ENCODE measurements at regions of chr2 and their contacts with region 1.

Region 1: GRCh38 chr2:237432484-237433092 is 18.6 kb upstream of the COL6A3 start:
- DNase-seq: peak; percentile 64 to 94
- H3K4me3 ChIP-seq: peak overlapping the region; percentile 22; the same call in 1 of the 2 replicates
- H3K27ac ChIP-seq: peak overlapping the region; percentile 76
- H3K4me1 ChIP-seq: peaks cover 34% of the 10 kb centered on the region
- H3K27me3 ChIP-seq: no peaks in the 10 kb centered on the region
- CTCF ChIP-seq: no peak; the same call in 1 of the 2 replicates

Region 2: DNA sequence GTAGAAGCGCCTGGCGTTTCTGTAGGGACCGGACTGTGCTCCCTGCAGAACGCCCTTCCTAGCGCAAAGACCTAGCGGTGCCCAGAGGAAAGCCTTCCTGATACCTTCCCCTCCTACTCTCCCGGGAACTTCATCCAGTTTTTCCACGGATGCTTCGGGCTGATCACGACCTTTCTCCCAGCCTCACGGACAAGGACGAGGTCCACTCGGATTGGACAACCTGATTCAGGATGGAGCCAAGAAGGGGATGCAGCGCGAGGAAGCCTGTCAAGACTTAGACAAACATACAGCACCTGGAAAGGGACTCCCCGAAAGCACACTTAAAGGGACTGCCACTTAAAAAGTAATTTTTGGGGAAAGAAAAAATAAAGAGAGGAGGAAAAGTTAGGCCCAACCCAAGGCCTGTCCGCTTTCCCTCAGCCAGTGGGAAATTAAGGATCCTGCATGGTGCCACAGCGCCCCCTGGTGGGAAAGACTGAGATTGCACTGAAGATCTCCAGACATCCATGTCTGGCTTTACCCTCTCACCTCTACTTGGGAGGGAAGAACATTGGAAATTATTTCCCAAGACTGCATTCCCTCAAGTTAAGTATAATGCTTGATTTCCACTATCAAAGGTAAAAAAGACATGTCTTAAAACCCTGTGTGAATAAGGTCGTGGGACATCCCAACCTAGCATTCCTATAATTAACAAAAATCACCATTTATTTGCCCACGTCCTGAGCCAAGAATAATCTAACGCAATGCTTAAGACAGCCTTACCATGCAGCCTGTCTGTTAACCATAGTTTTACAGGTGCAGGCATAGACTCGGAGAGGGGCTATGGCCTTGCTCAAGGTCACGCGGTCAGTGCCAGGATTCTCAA is 360.3 kb before region 1 on chr2:
- CTCF ChIA-PET with region 1: no interaction called
- POLR2A ChIA-PET with region 1: interaction called, 10 read pairs
- intact Hi-C with region 1: no loop called
- DNase-seq: peak; percentile 40 to 76
- H3K4me3 ChIP-seq: no peak overlapping the region
- H3K27ac ChIP-seq: no peak overlapping the region
- H3K4me1 ChIP-seq: peaks cover 22% of the 10 kb centered on the region
- H3K27me3 ChIP-seq: 0 out of 2 replicates have a peak, but pooled peaks cover 8% of the 10 kb centered on the region
- CTCF ChIP-seq: peak; percentile 100

Region 3: GRCh38 chr2:237451643-237452469 is 19.3 kb after region 1 on chr2:
- CTCF ChIA-PET with region 1: no interaction called
- POLR2A ChIA-PET with region 1: no interaction called
- intact Hi-C with region 1: no loop called
- DNase-seq: no peak
- H3K4me3 ChIP-seq: no peak overlapping the region
- H3K27ac ChIP-seq: no peak overlapping the region
- H3K4me1 ChIP-seq: peaks cover 5% of the 10 kb centered on the region; the same call in 1 of the 2 replicates
- H3K27me3 ChIP-seq: no peaks in the 10 kb centered on the region
- CTCF ChIP-seq: no peak

Region 4: DNA sequence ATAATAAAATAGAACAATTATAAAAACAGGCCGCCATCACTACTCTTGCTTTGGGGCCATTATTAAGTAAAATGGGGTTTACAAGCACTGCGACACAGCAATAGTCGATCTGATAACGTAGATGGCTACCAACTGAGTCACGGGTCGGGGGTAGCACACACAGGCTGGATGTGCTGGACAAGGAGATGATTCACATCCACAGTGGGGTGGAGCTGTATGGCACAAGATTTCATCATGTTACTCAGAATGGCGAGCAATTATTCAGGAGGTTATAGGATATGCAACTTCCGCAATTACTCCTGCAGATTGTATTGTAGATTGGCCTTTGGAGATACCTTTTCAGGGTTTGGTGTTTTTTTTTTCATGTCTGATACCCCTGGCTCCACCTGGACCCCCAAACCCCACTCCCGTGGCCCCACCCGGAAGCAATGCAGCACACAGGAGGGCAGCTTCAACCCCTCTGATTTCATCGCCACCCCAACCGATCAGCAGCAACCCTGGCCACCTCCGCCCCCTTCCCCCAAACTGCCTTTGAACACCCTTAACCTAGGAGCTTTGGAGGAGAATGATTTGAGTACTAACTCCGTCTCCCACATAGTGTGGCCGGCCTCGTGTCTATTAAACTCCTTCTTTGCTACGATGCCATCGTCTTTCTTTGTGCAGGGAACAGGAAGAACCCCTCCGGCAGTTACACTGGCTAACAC is 33.1 kb after region 1 on chr2:
- CTCF ChIA-PET with region 1: interaction called, 3 read pairs
- POLR2A ChIA-PET with region 1: no interaction called
- intact Hi-C with region 1: loop called (anchors 2 kb)
- DNase-seq: peak; percentile 79 to 97
- H3K4me3 ChIP-seq: no peak overlapping the region
- H3K27ac ChIP-seq: peak overlapping the region; percentile 95
- H3K4me1 ChIP-seq: peaks cover 36% of the 10 kb centered on the region
- H3K27me3 ChIP-seq: no peaks in the 10 kb centered on the region
- CTCF ChIP-seq: no peak